IMR-90 (cell line): ENCODE measurements at regions of chr2 and their contacts with region 1.

Region 1: DNA sequence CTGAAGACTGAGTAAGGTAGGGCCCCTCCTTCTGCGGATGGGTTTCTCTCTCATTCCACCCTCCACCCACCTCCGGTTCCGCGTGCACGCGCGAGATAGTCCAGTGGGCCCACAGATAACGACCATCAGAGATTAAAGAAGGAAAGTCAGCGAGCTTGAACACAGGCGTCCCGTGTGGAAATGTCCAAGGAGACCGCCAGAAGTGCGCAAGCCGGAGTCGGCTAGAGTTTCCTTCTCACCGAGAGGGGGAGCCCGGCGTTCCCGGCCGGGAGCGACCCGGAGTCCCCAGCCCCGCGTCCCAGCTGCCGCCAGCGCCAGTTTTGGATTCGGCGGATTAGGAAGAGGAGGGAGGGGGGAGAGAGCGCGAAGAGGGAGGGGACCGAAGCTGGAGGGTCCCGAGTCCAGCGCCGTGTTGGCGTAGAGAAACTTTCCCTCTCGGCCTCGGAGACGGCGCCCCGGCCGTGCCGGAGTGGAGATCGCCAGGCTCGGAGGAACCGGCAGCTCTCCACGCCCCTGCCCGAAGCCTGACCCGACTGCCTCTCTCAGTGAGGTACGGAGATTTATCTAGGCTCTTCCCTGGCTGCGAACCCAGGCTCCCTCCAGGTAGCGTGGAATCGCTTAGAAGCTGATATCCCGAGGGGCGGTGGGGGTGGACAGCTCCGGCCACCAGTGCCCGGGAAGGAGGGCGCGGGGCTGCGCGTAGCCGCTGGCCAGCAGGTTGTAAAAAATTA is at the start of gene GULP1:
- DNase-seq: peak; percentile 75
- ATAC-seq: peak; percentile 74
- H3K4me3 ChIP-seq: peak within 1 kb of the TSS; percentile 77
- H3K27ac ChIP-seq: peak within 1 kb of the TSS; percentile 97
- H3K4me1 ChIP-seq: no peaks in the 10 kb centered on the region
- H3K27me3 ChIP-seq: no peaks in the 10 kb centered on the region
- CTCF ChIP-seq: peak; percentile 65
- POLR2A ChIP-seq: peak; percentile 42; the same call in 1 of the 2 replicates
- RAD21 ChIP-seq: peak; percentile 65
- total RNA-seq, gene GULP1: 40.1 and 54.4 TPM in 2 replicates

Region 2: GRCh38 chr2:187499941-187500532 is 791.7 kb before region 1 on chr2:
- CTCF ChIA-PET with region 1: no interaction called
- POLR2A ChIA-PET with region 1: no interaction called
- dilution Hi-C with region 1: no loop called
- in situ Hi-C with region 1: no loop called
- intact Hi-C with region 1: loop called (anchors 2 kb)
- DNase-seq: peak; percentile 66
- ATAC-seq: peak; percentile 71
- H3K4me3 ChIP-seq: no peak overlapping the region
- H3K27ac ChIP-seq: no peak overlapping the region
- H3K4me1 ChIP-seq: peaks cover 9% of the 10 kb centered on the region
- H3K27me3 ChIP-seq: no peaks in the 10 kb centered on the region
- CTCF ChIP-seq: peak; percentile 94
- POLR2A ChIP-seq: 0 out of 2 replicates have a peak, but pooled peaks have one; percentile 30
- RAD21 ChIP-seq: peak; percentile 96

Region 3: GRCh38 chr2:187594801-187595200 is 697.0 kb before region 1 on chr2:
- CTCF ChIA-PET with region 1: no interaction called
- POLR2A ChIA-PET with region 1: no interaction called
- dilution Hi-C with region 1: no loop called
- in situ Hi-C with region 1: no loop called
- intact Hi-C with region 1: loop called (anchors 1 kb)
- DNase-seq: peak; percentile 44
- ATAC-seq: peak; percentile 69
- H3K4me3 ChIP-seq: no peak overlapping the region
- H3K27ac ChIP-seq: no peak overlapping the region
- H3K4me1 ChIP-seq: peaks cover 2% of the 10 kb centered on the region; the same call in 1 of the 2 replicates
- H3K27me3 ChIP-seq: no peaks in the 10 kb centered on the region; the same call in 1 of the 2 replicates
- CTCF ChIP-seq: peak; percentile 49
- POLR2A ChIP-seq: no peak
- RAD21 ChIP-seq: peak; percentile 50

Region 4: GRCh38 chr2:188369365-188369764 is 77.6 kb after region 1 on chr2:
- CTCF ChIA-PET with region 1: interaction called, 7 read pairs
- POLR2A ChIA-PET with region 1: no interaction called
- dilution Hi-C with region 1: no loop called
- in situ Hi-C with region 1: no loop called
- intact Hi-C with region 1: loop called (anchors 5 kb)
- DNase-seq: peak; percentile 45
- ATAC-seq: peak; percentile 67; the same call in 1 of the 2 replicates
- H3K4me3 ChIP-seq: no peak overlapping the region
- H3K27ac ChIP-seq: no peak overlapping the region
- H3K4me1 ChIP-seq: no peaks in the 10 kb centered on the region
- H3K27me3 ChIP-seq: no peaks in the 10 kb centered on the region
- CTCF ChIP-seq: peak; percentile 59
- POLR2A ChIP-seq: no peak
- RAD21 ChIP-seq: peak; percentile 63

Region 5: DNA sequence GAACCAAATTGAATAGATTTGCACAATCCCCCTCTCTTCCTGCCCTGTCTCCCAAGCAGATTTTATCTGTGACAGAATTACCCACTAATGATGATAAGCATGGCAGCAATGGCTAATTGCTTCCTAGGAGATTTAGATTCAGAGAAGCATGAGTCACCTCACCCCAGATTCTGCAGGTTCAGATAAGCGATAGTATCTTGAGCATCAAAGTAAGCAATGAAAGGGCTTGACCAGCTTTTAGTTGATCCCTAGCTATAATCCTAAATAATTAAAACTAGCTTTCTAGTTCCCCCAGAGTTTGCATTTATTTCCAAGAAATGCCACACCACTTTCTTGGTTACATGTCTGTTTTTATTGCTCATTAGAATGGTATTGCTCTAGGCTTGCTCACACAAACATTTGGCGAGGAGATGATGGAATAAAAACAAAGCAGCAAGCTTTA is 204.2 kb after region 1 on chr2:
- CTCF ChIA-PET with region 1: interaction called, 5 read pairs
- POLR2A ChIA-PET with region 1: no interaction called
- dilution Hi-C with region 1: no loop called
- in situ Hi-C with region 1: no loop called
- intact Hi-C with region 1: loop called (anchors 5 kb)
- DNase-seq: peak; percentile 74
- ATAC-seq: peak; percentile 88
- H3K4me3 ChIP-seq: no peak overlapping the region
- H3K27ac ChIP-seq: no peak overlapping the region
- H3K4me1 ChIP-seq: peaks cover 11% of the 10 kb centered on the region
- H3K27me3 ChIP-seq: no peaks in the 10 kb centered on the region
- CTCF ChIP-seq: no peak
- POLR2A ChIP-seq: no peak
- RAD21 ChIP-seq: no peak

Region 6: DNA sequence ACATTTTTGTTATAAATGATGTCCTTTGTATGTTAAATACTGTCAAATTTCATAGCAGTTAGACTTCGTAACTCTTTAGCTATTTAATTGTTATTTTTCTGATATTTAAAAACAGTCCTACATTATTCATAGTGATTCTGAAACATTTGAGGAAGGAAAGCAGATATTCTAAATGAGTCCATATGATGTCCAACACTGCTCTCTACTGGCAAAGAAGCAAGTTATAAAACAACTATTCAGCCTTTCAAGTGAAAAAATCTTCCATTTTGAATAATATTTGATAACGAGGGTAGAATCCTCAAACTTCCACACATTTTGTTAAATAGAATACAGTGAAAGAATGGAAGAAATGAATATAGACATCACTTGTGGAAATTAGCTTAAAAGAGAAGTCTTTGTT is 220.7 kb after region 1 on chr2:
- CTCF ChIA-PET with region 1: interaction called, 3 read pairs
- POLR2A ChIA-PET with region 1: interaction called, 4 read pairs
- dilution Hi-C with region 1: no loop called
- in situ Hi-C with region 1: loop called (anchors 5 kb)
- intact Hi-C with region 1: loop called (anchors 1 kb)
- DNase-seq: peak; percentile 77
- ATAC-seq: peak; percentile 84
- H3K4me3 ChIP-seq: no peak overlapping the region
- H3K27ac ChIP-seq: no peak overlapping the region
- H3K4me1 ChIP-seq: no peaks in the 10 kb centered on the region
- H3K27me3 ChIP-seq: no peaks in the 10 kb centered on the region
- CTCF ChIP-seq: peak; percentile 80
- POLR2A ChIP-seq: peak; percentile 24; the same call in 1 of the 2 replicates
- RAD21 ChIP-seq: peak; percentile 94

Region 7: GRCh38 chr2:188725746-188726360 is 434.1 kb after region 1 on chr2:
- CTCF ChIA-PET with region 1: no interaction called
- POLR2A ChIA-PET with region 1: no interaction called
- dilution Hi-C with region 1: no loop called
- in situ Hi-C with region 1: no loop called
- intact Hi-C with region 1: no loop called
- DNase-seq: peak; percentile 73
- ATAC-seq: 0 out of 2 replicates have a peak, but pooled peaks have one; percentile 42
- H3K4me3 ChIP-seq: no peak overlapping the region
- H3K27ac ChIP-seq: no peak overlapping the region
- H3K4me1 ChIP-seq: no peaks in the 10 kb centered on the region
- H3K27me3 ChIP-seq: no peaks in the 10 kb centered on the region
- CTCF ChIP-seq: no peak
- POLR2A ChIP-seq: no peak
- RAD21 ChIP-seq: no peak

Region 8: GRCh38 chr2:189421644-189422043 is 1129.9 kb after region 1 on chr2:
- CTCF ChIA-PET with region 1: no interaction called
- POLR2A ChIA-PET with region 1: no interaction called
- dilution Hi-C with region 1: no loop called
- in situ Hi-C with region 1: no loop called
- intact Hi-C with region 1: loop called (anchors 5 kb)
- DNase-seq: peak; percentile 89
- ATAC-seq: peak; percentile 95
- H3K4me3 ChIP-seq: no peak overlapping the region
- H3K27ac ChIP-seq: no peak overlapping the region
- H3K4me1 ChIP-seq: peaks cover 2% of the 10 kb centered on the region
- H3K27me3 ChIP-seq: no peaks in the 10 kb centered on the region
- CTCF ChIP-seq: no peak
- POLR2A ChIP-seq: no peak
- RAD21 ChIP-seq: no peak